Activated CD4-positive, alpha-beta memory T cell treated with anti-CD3 and anti-CD28 coated beads for 36 hours (primary cell): ENCODE measurements at regions of chr10 and their contacts with region 1.

Region 1: DNA sequence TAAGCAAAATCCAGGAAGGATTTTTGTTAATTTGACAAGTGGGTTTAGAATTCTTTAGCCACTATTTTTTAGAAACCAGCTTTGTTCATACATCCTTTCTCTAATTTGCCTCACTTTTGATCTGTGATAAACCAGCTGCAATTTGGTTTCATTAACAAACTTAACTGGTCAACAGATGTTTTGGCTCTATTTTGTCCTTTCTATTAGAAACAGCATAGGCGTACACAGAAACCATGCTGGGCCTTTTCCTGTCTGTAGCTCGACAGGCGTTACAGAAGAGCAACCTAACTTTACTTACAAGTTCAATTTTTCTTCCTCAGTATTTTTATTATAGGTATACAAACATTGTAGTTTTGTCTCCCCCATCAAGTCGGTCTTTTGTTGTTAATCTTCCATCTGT is 28.2 kb downstream of the KAT6B start:
- DNase-seq: no peak
- H3K4me3 Mint-ChIP-seq: no peak overlapping the region
- H3K27ac Mint-ChIP-seq: peak overlapping the region; percentile 38
- H3K4me1 Mint-ChIP-seq: peaks cover 36% of the 10 kb centered on the region
- H3K27me3 Mint-ChIP-seq: no peaks in the 10 kb centered on the region

Region 2: DNA sequence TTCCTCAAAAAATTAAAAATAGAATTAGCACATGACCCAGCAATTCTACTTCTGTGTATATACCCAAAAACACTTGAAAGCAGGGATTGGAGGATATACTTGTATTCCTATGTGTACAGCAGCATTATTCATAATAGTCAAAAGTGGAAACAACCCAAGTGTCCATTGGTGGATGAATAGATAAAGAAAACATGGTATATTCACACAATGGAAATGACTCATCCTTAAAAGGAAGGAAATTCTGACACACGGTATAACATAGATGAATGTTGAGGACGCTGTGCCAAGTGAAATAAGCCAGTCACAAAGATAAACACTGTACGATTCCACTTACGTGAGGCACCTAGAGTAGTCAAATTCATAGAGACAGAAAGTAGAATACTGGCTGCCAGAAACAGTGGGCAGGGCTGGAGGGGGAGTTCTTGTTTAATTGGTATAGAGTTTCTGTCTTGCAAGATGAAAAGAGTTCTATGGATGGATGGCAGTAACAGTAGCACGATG is 54.8 kb before region 1 on chr10:
- CTCF ChIA-PET with region 1: no interaction called
- POLR2A ChIA-PET with region 1: no interaction called
- intact Hi-C with region 1: no loop called
- DNase-seq: peak; percentile 65
- H3K4me3 Mint-ChIP-seq: no peak overlapping the region
- H3K27ac Mint-ChIP-seq: peak overlapping the region; percentile 39
- H3K4me1 Mint-ChIP-seq: peaks cover 10% of the 10 kb centered on the region
- H3K27me3 Mint-ChIP-seq: no peaks in the 10 kb centered on the region

Region 3: GRCh38 chr10:74871595-74872382 is 17.2 kb after region 1 on chr10:
- CTCF ChIA-PET with region 1: interaction called, 3 read pairs
- POLR2A ChIA-PET with region 1: no interaction called
- intact Hi-C with region 1: loop called (anchors 1 kb)
- DNase-seq: peak; percentile 28
- H3K4me3 Mint-ChIP-seq: peak overlapping the region; percentile 32
- H3K27ac Mint-ChIP-seq: peak overlapping the region; percentile 45
- H3K4me1 Mint-ChIP-seq: peaks cover 45% of the 10 kb centered on the region
- H3K27me3 Mint-ChIP-seq: no peaks in the 10 kb centered on the region